Naive thymus-derived CD4-positive, alpha-beta T cell (primary cell): ENCODE measurements at regions of chr16 and their contacts with region 1.

Region 1: GRCh38 chr16:11356573-11357331 is 11.5 kb downstream of the RMI2 start:
- DNase-seq: peak in 8 of 9 donors; percentile 17 to 55 (median 36)
- ATAC-seq: peak; percentile 47
- H3K4me3 ChIP-seq: no peak overlapping the region
- H3K4me3 Mint-ChIP-seq: peak overlapping the region in 5 of 10 donors; percentile 9 to 86 (median 31)
- H3K27ac ChIP-seq: no peak overlapping the region
- H3K27ac Mint-ChIP-seq: peak overlapping the region in 8 of 9 donors; percentile 22 to 99 (median 45)
- H3K4me1 ChIP-seq: peaks cover 33 to 51% of the 10 kb centered on the region in 2 donors
- H3K4me1 Mint-ChIP-seq: peaks cover 37 to 80% (median 68%) of the 10 kb centered on the region in 7 donors
- H3K27me3 ChIP-seq: no peaks in the 10 kb centered on the region
- H3K27me3 Mint-ChIP-seq: peaks cover 0 to 25% (median 4%) of the 10 kb centered on the region in 5 donors

Region 2: GRCh38 chr16:10971560-10971961 is 385.2 kb before region 1 on chr16:
- CTCF ChIA-PET with region 1: interaction called, 19 read pairs
- POLR2A ChIA-PET with region 1: interaction called, 6 read pairs
- intact Hi-C with region 1: loop called (anchors 1 kb)
- DNase-seq: peak in 6 of 9 donors; percentile 15 to 56 (median 46)
- ATAC-seq: peak; percentile 62
- H3K4me3 ChIP-seq: no peak overlapping the region
- H3K4me3 Mint-ChIP-seq: peak overlapping the region in 1 of 10 donors; percentile 60
- H3K27ac ChIP-seq: no peak overlapping the region
- H3K27ac Mint-ChIP-seq: peak overlapping the region in 3 of 9 donors; percentile 18 to 49 (median 42)
- H3K4me1 ChIP-seq: no peaks in the 10 kb centered on the region
- H3K4me1 Mint-ChIP-seq: peaks cover 6 to 70% (median 15%) of the 10 kb centered on the region in 7 donors
- H3K27me3 ChIP-seq: no peaks in the 10 kb centered on the region
- H3K27me3 Mint-ChIP-seq: no peaks in the 10 kb centered on the region

Region 3: DNA sequence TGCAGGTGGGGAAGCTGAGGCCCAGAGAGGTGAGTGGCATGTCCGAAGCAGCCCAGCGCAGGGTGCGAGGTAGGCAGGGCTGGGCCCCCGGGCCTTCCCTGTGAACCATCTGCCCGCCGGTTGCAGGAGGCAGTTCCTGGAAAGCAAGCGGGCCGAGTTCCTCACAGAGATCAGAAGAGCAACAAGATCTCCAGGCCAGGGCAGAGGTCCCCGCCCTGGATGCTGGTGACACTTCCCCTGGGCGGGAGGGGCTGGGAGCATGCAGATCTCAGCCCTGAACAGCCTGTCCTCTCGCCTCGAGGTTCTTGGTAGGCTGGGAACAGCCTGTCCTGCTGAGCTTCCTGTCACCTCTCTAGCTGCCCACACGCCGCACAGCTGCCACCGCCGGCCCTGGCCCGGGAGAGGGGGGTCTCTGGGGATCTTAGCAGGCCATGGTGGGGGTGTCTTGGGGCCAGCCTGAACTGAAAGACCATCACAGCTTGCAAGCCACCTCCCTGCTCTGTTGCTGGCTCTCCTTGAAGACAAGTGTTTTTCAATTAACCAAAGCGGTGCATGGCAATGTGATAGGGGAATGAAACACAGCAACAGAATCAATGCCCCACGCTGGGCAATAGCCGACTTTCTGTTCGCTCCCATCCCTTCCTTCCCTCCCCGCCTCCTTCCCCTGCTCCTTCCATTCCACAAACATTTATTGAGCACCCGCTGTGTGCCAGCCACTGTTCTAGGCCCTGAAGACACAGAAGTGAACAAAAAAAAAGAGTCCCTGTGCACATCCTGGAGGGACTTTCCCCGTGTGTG is 132.5 kb before region 1 on chr16:
- CTCF ChIA-PET with region 1: no interaction called
- POLR2A ChIA-PET with region 1: interaction called, 11 read pairs
- intact Hi-C with region 1: no loop called
- DNase-seq: peak; percentile 36 to 67 (median 48)
- ATAC-seq: peak; percentile 68
- H3K4me3 ChIP-seq: peak overlapping the region; percentile 49
- H3K4me3 Mint-ChIP-seq: peak overlapping the region; percentile 78 to 87 (median 80)
- H3K27ac ChIP-seq: peak overlapping the region; percentile 91
- H3K27ac Mint-ChIP-seq: peak overlapping the region; percentile 97 to 99 (median 98)
- H3K4me1 ChIP-seq: peaks cover 30 to 36% of the 10 kb centered on the region in 2 donors
- H3K4me1 Mint-ChIP-seq: peaks cover 37 to 73% (median 52%) of the 10 kb centered on the region in 7 donors
- H3K27me3 ChIP-seq: no peaks in the 10 kb centered on the region
- H3K27me3 Mint-ChIP-seq: no peaks in the 10 kb centered on the region

Region 4: DNA sequence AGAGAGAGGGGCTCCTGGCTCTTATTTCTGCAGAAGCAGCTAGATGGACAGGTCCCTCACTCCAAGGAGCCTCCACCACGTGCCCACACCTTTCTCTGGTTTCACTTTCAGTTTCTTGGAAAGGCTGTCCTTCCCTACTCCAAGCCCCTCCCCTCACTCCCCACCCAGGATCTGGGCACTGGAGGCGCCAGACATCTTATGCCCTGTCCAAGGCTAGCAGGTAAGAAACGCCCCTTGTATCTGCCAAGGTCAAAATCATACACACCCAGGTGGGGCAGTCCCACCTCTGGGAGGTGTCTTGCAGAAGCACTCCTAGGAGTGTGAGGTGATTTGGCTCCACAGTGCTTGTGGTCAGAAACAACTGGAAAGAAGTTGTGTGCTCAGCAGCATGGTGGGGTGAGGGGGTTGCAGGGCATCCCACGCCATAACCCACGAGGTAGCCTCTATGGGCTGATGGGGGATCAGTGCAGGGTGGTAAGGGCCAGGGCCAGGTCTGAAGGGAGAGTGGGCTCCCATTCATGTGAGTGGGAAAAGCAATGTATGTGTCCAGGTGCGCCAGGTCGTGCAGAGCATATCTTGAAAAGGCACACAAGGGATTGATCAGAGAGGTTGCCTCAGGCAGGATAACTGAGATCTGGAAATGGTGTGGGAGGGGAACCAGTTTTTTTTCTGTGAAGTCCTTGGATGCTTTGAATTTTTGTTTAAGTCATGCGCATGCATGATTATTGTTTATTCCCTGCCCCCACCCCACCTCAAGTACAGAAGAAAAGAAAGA is 43.8 kb before region 1 on chr16:
- CTCF ChIA-PET with region 1: no interaction called
- POLR2A ChIA-PET with region 1: interaction called, 4 read pairs
- intact Hi-C with region 1: loop called in 1 of 2 experiments (anchors 1 kb)
- DNase-seq: peak in 2 of 9 donors; percentile 15 to 17
- ATAC-seq: peak; percentile 17
- H3K4me3 ChIP-seq: peak overlapping the region; percentile 23
- H3K4me3 Mint-ChIP-seq: peak overlapping the region; percentile 35 to 72 (median 58)
- H3K27ac ChIP-seq: no peak overlapping the region
- H3K27ac Mint-ChIP-seq: peak overlapping the region; percentile 11 to 91 (median 75)
- H3K4me1 ChIP-seq: peaks cover 23 to 34% of the 10 kb centered on the region in 2 donors
- H3K4me1 Mint-ChIP-seq: peaks cover 5 to 69% (median 31%) of the 10 kb centered on the region in 7 donors
- H3K27me3 ChIP-seq: no peaks in the 10 kb centered on the region
- H3K27me3 Mint-ChIP-seq: peaks cover 0 to 2% (median 0%) of the 10 kb centered on the region in 5 donors

Region 5: DNA sequence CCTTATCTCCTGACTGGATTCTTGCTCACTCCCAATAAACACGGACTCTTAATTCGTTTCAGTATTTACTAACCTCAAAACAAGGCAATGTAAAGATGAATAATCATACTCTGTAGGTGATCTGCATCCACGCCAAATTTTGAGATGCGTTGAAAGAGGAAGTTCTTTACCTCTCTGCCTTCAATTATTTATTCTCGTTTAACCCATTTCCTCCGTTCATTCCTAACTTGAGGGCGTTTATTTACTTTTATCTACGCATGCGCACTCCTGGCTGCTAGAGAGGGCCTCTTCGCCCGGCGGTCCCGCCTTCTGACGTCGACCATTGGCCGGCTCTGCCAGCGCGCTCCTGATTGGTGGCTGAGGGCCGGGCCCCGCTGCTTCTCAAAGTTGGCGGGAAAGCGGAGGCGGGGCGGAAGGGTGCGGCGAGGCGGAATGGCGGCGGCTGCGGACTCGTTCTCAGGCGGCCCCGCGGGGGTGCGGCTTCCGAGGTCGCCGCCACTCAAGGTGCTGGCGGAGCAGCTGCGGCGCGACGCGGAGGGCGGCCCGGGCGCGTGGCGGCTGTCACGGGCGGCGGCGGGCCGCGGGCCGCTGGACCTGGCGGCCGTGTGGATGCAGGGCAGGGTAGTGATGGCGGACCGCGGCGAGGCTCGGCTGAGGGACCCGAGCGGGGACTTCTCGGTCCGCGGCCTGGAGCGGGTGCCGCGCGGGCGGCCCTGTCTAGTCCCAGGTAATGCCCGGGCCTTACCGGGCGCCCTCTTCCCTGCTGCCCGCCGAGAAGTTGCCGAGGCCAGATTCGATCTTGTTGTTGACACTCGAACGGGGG is 11.5 kb before region 1 on chr16 and contains the start of gene RMI2:
- CTCF ChIA-PET with region 1: interaction called, 5 read pairs
- POLR2A ChIA-PET with region 1: interaction called, 5 read pairs
- intact Hi-C with region 1: loop called (anchors 1 kb)
- DNase-seq: peak; percentile 90 to 98 (median 95)
- ATAC-seq: peak; percentile 99
- H3K4me3 ChIP-seq: peak within 1 kb of the TSS; percentile 44
- H3K4me3 Mint-ChIP-seq: peak within 1 kb of the TSS; percentile 79 to 98 (median 92)
- H3K27ac ChIP-seq: peak within 1 kb of the TSS; percentile 65
- H3K27ac Mint-ChIP-seq: peak within 1 kb of the TSS; percentile 58 to 99 (median 83)
- H3K4me1 ChIP-seq: no peaks in the 10 kb centered on the region
- H3K4me1 Mint-ChIP-seq: peaks cover 10 to 49% (median 24%) of the 10 kb centered on the region in 7 donors
- H3K27me3 ChIP-seq: no peaks in the 10 kb centered on the region
- H3K27me3 Mint-ChIP-seq: no peaks in the 10 kb centered on the region
- total RNA-seq, gene RMI2: 1.8 to 57.0 (median 3.3) TPM

Region 6: GRCh38 chr16:11379420-11379819 is 22.7 kb after region 1 on chr16:
- CTCF ChIA-PET with region 1: no interaction called
- POLR2A ChIA-PET with region 1: no interaction called
- intact Hi-C with region 1: no loop called
- DNase-seq: no peak
- ATAC-seq: peak; percentile 88
- H3K4me3 ChIP-seq: no peak overlapping the region
- H3K4me3 Mint-ChIP-seq: peak overlapping the region in 1 of 10 donors; percentile 24
- H3K27ac ChIP-seq: no peak overlapping the region
- H3K27ac Mint-ChIP-seq: peak overlapping the region in 2 of 9 donors; percentile 56 to 69
- H3K4me1 ChIP-seq: no peaks in the 10 kb centered on the region
- H3K4me1 Mint-ChIP-seq: peaks cover 0 to 10% (median 0%) of the 10 kb centered on the region in 7 donors
- H3K27me3 ChIP-seq: no peaks in the 10 kb centered on the region
- H3K27me3 Mint-ChIP-seq: peaks cover 0 to 2% (median 0%) of the 10 kb centered on the region in 5 donors